ENCODE measurements at regions of chr11 and their contacts with region 1.

Region 1: DNA sequence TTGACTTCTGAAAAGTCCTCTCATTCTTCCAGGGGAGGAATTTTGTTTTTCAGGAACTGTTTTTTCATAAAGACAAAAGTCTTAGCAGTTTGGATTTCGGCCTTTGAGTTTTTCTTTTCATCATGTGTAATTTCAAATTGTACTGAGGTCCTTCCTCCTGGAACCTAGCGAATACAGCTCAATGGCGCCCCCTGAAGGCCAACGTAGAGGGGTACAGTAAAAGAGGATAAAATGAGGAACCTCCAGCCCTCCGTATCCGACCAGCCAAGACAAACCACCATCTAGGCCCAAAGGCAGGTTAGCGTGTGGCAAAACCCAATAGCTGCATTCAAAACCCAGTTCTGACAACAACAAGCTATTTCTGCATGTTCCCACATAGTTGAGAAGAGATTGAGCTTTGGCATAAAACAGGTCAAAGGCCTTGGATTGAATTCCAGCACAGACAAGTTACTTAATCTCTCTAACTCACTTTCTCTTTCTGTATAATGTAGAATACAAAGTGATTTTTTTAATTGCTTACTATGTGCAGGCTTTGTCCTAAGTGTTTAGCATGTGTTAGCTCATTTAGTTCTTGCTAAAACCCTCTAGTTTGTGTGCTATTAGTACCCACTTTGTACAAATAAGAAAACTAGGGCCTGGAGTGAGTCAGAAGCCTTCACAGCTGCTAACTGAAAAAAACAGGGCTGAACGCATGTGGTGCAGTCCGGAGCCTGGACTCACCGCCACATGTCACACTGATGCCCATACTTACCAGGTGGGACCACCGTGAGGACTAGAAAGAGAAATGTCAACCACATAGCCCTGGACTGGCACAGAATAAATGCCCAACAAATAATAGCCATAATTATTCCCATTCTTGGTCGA is 43.2 kb upstream of the ETS1 start:
- DNase-seq: peak in 1 of 2 donors; percentile 92
- H3K4me3 ChIP-seq: no peak overlapping the region
- H3K27ac ChIP-seq: peak overlapping the region; percentile 45 to 49
- H3K4me1 ChIP-seq: no peaks in the 10 kb centered on the region
- H3K27me3 ChIP-seq: no peaks in the 10 kb centered on the region
- CTCF ChIP-seq: peak; percentile 86 to 91 (median 86)

Region 2: GRCh38 chr11:128039140-128040021 is 591.2 kb before region 1 on chr11:
- intact Hi-C with region 1: loop called (anchors 5 kb)
- DNase-seq: peak in 1 of 2 donors; percentile 25
- H3K4me3 ChIP-seq: no peak overlapping the region
- H3K27ac ChIP-seq: no peak overlapping the region
- H3K4me1 ChIP-seq: no peaks in the 10 kb centered on the region
- H3K27me3 ChIP-seq: no peaks in the 10 kb centered on the region
- CTCF ChIP-seq: no peak

Region 3: GRCh38 chr11:128157423-128158298 is 472.9 kb before region 1 on chr11:
- intact Hi-C with region 1: loop called (anchors 5 kb)
- DNase-seq: peak in 1 of 2 donors; percentile 66
- H3K4me3 ChIP-seq: peak overlapping the region in 1 of 2 donors; percentile 35
- H3K27ac ChIP-seq: no peak overlapping the region
- H3K4me1 ChIP-seq: peaks cover 0 to under 1% of the 10 kb centered on the region in 2 donors
- H3K27me3 ChIP-seq: no peaks in the 10 kb centered on the region
- CTCF ChIP-seq: peak; percentile 76 to 81 (median 80)

Region 4: GRCh38 chr11:128172046-128172878 is 458.3 kb before region 1 on chr11:
- intact Hi-C with region 1: loop called (anchors 1 kb)
- DNase-seq: peak in 1 of 2 donors; percentile 91
- H3K4me3 ChIP-seq: no peak overlapping the region
- H3K27ac ChIP-seq: no peak overlapping the region
- H3K4me1 ChIP-seq: no peaks in the 10 kb centered on the region
- H3K27me3 ChIP-seq: no peaks in the 10 kb centered on the region
- CTCF ChIP-seq: peak; percentile 48 to 84 (median 74)

Region 5: DNA sequence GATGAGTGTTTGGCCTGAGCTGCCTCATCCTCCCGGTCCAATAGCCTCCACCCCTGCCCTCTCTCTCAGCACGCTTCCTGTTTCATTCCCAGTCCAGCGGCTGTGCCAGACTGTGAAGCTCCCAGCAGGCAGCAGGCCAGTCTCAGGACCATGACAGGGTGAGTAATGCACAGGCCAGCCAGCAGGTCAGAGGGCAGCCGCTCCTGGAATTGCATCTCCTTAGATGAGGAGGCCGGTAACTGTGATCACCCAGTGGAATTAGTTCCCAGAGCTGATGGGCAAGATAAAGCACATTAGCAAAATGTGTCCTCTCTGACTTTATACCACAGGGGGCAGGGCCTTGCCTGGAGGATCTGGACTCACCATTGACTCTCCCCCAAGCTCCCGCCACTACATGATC is 294.4 kb before region 1 on chr11:
- intact Hi-C with region 1: loop called (anchors 5 kb)
- DNase-seq: peak in 1 of 2 donors; percentile 77
- H3K4me3 ChIP-seq: no peak overlapping the region
- H3K27ac ChIP-seq: no peak overlapping the region
- H3K4me1 ChIP-seq: no peaks in the 10 kb centered on the region
- H3K27me3 ChIP-seq: no peaks in the 10 kb centered on the region
- CTCF ChIP-seq: no peak

Region 6: GRCh38 chr11:128575961-128576350 is 54.6 kb before region 1 on chr11:
- intact Hi-C with region 1: no loop called
- DNase-seq: no peak
- H3K4me3 ChIP-seq: no peak overlapping the region
- H3K27ac ChIP-seq: no peak overlapping the region
- H3K4me1 ChIP-seq: peaks cover 0 to 7% of the 10 kb centered on the region in 2 donors
- H3K27me3 ChIP-seq: no peaks in the 10 kb centered on the region
- CTCF ChIP-seq: no peak

Measured in ascending aorta (tissue), 2 donors.